Activated CD4-positive, alpha-beta T cell treated with anti-CD3 and anti-CD28 coated beads for 36 hours (primary cell): ENCODE measurements at regions of chr17 and their contacts with region 1.

Region 1: DNA sequence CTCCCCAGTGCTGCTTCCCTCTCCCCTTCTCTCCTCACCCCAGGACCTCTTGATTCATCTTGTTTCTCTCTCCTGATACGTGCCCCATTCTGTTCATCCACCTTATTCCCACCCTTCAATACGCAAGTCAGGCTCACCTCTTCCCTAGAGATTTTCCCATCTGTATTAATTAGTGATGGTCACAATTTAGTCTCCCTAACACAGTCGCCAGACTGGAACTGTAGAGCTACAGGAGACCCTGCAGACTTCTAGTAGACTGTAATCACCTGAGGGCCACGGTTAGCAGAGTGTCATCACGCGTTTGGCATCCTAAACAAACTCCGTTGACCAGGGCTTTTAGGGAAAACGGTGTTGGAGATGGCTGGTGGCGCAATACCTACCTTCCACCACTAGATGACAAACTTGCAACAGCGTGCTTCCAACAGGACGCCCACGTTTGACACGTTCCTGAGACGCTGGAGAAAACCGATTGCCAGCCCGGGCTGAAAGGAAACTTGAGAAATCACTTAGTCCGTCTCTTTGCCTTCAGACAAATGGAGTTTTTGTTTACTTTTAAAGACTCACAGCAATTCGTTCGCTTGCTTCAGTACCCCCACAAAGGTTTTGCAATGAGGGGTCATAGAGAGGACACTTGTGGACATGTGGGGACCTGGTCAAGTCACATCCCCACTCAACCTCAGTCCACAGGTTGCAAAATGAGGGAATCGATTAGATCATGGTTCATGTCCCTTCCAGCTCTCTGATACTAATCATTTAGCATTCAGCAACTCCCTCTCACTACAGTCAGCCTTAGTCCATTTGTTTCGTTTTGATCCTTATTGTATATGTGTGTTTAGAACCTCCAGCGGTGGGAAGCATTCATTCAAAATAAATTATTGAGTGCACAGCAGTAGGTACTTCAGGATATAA is 20.6 kb downstream of the MYL4 start:
- DNase-seq: peak; percentile 90
- ATAC-seq: peak; percentile 94
- H3K4me3 Mint-ChIP-seq: peak overlapping the region; percentile 43
- H3K27ac Mint-ChIP-seq: peak overlapping the region; percentile 17
- H3K4me1 Mint-ChIP-seq: peaks cover 9% of the 10 kb centered on the region
- H3K27me3 Mint-ChIP-seq: peaks cover 5% of the 10 kb centered on the region

Region 2: GRCh38 chr17:47077576-47077975 is 152.2 kb before region 1 on chr17:
- CTCF ChIA-PET with region 1: no interaction called
- POLR2A ChIA-PET with region 1: no interaction called
- intact Hi-C with region 1: no loop called
- DNase-seq: peak; percentile 18
- ATAC-seq: no peak
- H3K4me3 Mint-ChIP-seq: no peak overlapping the region
- H3K27ac Mint-ChIP-seq: no peak overlapping the region
- H3K4me1 Mint-ChIP-seq: no peaks in the 10 kb centered on the region
- H3K27me3 Mint-ChIP-seq: no peaks in the 10 kb centered on the region

Region 3: GRCh38 chr17:47244697-47245096 is 14.9 kb after region 1 on chr17:
- CTCF ChIA-PET with region 1: interaction called, 17 read pairs
- POLR2A ChIA-PET with region 1: no interaction called
- intact Hi-C with region 1: no loop called
- DNase-seq: no peak
- ATAC-seq: no peak
- H3K4me3 Mint-ChIP-seq: no peak overlapping the region
- H3K27ac Mint-ChIP-seq: no peak overlapping the region
- H3K4me1 Mint-ChIP-seq: peaks cover under 1% of the 10 kb centered on the region
- H3K27me3 Mint-ChIP-seq: peaks cover 13% of the 10 kb centered on the region

Region 4: DNA sequence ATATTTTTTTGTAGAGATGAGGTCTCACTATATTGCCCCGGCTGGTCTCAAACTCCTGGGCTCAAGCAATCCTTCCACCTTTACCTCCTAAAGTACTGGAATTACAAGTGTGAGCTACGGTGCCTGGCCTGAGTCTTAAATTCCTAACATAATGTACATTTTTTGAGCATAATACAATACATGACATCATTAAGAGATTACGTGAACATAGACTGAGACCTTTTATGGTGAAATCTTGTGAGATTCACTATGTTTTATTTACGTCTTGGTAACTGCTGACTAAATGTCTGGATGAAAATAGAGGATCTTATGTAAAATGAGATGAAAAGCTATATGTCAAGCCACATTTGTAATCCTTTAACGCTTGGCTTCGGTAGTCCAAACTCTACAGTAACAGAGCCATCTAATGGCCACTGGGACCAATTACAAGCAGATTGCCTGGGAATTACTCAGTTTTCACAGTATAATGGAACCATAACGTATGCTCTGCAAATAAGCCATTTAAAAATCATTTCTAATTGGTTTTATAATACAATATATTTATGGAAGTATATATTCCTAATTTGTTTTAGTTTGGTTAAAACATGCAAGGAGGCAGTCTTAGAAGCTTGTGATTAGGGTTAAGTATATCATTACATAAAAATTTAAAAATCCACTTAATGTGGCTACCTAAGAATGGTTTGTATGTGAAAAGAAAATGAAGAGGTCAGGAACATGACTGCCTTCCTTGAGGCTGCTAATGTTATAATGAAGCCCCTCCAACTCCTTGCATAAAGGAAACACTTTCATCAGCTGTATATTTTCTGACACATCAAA is 85.9 kb after region 1 on chr17:
- CTCF ChIA-PET with region 1: interaction called, 33 read pairs
- POLR2A ChIA-PET with region 1: no interaction called
- intact Hi-C with region 1: loop called (anchors 1 kb)
- DNase-seq: no peak
- ATAC-seq: peak; percentile 65
- H3K4me3 Mint-ChIP-seq: no peak overlapping the region
- H3K27ac Mint-ChIP-seq: no peak overlapping the region
- H3K4me1 Mint-ChIP-seq: peaks cover 2% of the 10 kb centered on the region
- H3K27me3 Mint-ChIP-seq: no peaks in the 10 kb centered on the region